Adrenal gland (tissue), 19 donors: ENCODE measurements at regions of chr1 and their contacts with region 1.

Region 1: DNA sequence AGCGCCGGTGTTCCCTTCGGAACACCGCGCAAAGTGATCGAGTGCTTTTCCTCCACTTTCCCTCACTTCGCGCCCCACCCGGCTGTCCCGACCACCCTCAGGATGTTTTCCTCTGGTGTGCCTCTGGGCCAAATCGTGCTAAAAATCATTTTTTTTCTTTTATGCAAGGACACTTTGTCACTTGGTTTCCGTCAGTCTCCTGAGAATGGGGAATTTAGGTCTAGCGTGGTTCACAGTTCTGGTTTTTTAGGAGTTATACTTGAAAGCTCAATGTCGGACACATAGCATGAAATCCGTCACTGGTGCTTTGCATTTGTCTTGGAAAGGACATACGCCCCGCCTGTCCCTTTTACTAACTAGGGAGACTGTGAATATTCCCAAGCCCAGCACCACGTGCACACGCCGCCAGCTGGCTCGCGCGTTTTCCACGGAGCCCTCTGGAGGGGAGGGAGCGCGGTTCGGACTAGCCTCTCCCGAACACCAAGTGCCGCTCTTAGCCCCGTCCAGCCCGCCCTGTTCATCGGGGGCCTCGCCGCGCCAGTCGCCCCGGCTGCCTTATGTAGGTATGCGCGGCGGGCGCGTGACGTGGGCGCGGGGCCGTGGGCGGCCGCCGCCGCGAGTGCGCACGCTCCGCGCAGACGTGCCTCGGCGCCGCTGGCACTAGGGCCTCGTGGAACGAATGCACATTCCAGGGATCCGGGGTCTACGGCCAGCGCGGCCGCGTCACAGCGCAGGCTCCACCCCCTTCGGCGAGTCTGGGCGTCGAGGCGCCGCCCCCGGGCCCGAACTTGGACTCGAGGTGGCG is 572 bp upstream of the IRF2BP2 start:
- DNase-seq: peak; percentile 96 to 98 (median 96)
- H3K4me3 ChIP-seq: peak overlapping the region; percentile 31 to 88 (median 55)
- H3K27ac ChIP-seq: peak overlapping the region; percentile 97 to 100 (median 100)
- H3K4me1 ChIP-seq: peaks cover 45% of the 10 kb centered on the region in 2 donors
- H3K27me3 ChIP-seq: no peaks in the 10 kb centered on the region
- CTCF ChIP-seq: peak in 3 of 6 experiments; percentile 21 to 41 (median 40)
- POLR2A ChIP-seq: peak; percentile 99

Region 2: GRCh38 chr1:234553156-234553863 is 57.2 kb before region 1 on chr1:
- intact Hi-C with region 1: no loop called
- DNase-seq: peak in 4 of 7 donors; percentile 8 to 86 (median 47)
- H3K4me3 ChIP-seq: no peak overlapping the region
- H3K27ac ChIP-seq: peak overlapping the region in 2 of 5 donors; percentile 70 to 73
- H3K4me1 ChIP-seq: peaks cover 0 to 14% of the 10 kb centered on the region in 2 donors
- H3K27me3 ChIP-seq: no peaks in the 10 kb centered on the region
- CTCF ChIP-seq: no peak
- POLR2A ChIP-seq: no peak

Region 3: GRCh38 chr1:234978397-234979295 is 368.1 kb after region 1 on chr1:
- intact Hi-C with region 1: loop called (anchors 5 to 10 kb)
- DNase-seq: peak; percentile 73 to 91 (median 86)
- H3K4me3 ChIP-seq: peak overlapping the region in 1 of 4 donors; percentile 7
- H3K27ac ChIP-seq: peak overlapping the region; percentile 94 to 99 (median 95)
- H3K4me1 ChIP-seq: peaks cover 61 to 82% of the 10 kb centered on the region in 2 donors
- H3K27me3 ChIP-seq: no peaks in the 10 kb centered on the region
- CTCF ChIP-seq: peak in 1 of 6 experiments; percentile 21
- POLR2A ChIP-seq: peak in 1 of 2 donors; percentile 67